CD4-positive, alpha-beta T cell (primary cell): ENCODE measurements at regions of chr2 and their contacts with region 1.

Region 1: DNA sequence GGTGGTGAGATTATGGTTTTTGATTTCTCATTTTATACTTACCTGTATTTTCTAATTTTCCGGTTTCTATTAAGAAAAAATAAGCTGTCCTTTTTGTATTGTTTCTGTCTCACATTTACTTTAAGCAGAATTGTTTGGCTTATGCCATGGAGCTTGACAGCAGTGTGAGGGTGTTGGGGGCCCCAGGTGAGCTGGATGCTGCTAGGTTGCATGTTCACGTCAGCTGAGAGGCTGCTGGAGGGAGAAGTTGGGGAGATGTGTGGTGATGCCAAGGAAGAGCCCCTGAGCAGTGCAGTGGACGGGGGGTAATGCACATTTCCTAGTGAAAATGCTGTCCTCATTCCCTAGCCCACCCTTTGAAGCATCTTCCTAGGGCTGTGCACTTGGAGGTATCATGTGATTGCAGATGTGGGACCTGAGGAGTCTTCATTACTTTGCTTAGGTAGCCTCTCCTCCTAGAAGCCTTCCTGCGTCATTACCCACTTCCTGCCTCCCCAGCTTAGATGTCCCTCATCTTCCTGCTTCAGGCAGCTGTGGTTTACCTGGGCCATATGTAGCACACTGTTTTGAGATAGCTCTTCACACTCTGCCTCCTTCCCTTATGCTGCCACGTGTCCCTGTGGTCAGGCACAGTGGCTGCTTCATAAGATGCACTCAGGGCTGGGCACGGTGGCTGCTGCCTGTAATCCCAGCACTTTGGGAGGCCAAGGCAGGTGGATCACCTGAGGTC is 16.2 kb downstream of the ATG16L1 start:
- DNase-seq: peak; percentile 64 to 96 (median 74)
- ATAC-seq: peak; percentile 88
- H3K4me3 ChIP-seq: peak overlapping the region; percentile 26
- H3K4me3 Mint-ChIP-seq: peak overlapping the region; percentile 62
- H3K27ac ChIP-seq: peak overlapping the region; percentile 86 to 88
- H3K27ac Mint-ChIP-seq: peak overlapping the region; percentile 97
- H3K4me1 ChIP-seq: peaks cover 57% of the 10 kb centered on the region
- H3K4me1 Mint-ChIP-seq: peaks cover 74% of the 10 kb centered on the region
- H3K27me3 ChIP-seq: no peaks in the 10 kb centered on the region
- H3K27me3 Mint-ChIP-seq: no peaks in the 10 kb centered on the region
- CTCF ChIP-seq: no peak

Region 2: GRCh38 chr2:233084488-233084887 is 183.2 kb before region 1 on chr2:
- CTCF ChIA-PET with region 1: no interaction called
- POLR2A ChIA-PET with region 1: interaction called, 6 read pairs
- intact Hi-C with region 1: loop called in 1 of 2 experiments (anchors 5 kb)
- DNase-seq: peak in 9 of 14 experiments; percentile 31 to 83 (median 53)
- ATAC-seq: peak; percentile 32
- H3K4me3 ChIP-seq: peak overlapping the region; percentile 19
- H3K4me3 Mint-ChIP-seq: peak overlapping the region; percentile 83
- H3K27ac ChIP-seq: peak overlapping the region; percentile 67 to 71
- H3K27ac Mint-ChIP-seq: peak overlapping the region; percentile 85
- H3K4me1 ChIP-seq: peaks cover 94% of the 10 kb centered on the region
- H3K4me1 Mint-ChIP-seq: peaks cover 88% of the 10 kb centered on the region
- H3K27me3 ChIP-seq: no peaks in the 10 kb centered on the region
- H3K27me3 Mint-ChIP-seq: no peaks in the 10 kb centered on the region
- CTCF ChIP-seq: no peak

Region 3: GRCh38 chr2:233094614-233095013 is 173.1 kb before region 1 on chr2:
- CTCF ChIA-PET with region 1: no interaction called
- POLR2A ChIA-PET with region 1: no interaction called
- intact Hi-C with region 1: no loop called
- DNase-seq: no peak
- ATAC-seq: no peak
- H3K4me3 ChIP-seq: no peak overlapping the region
- H3K4me3 Mint-ChIP-seq: no peak overlapping the region
- H3K27ac ChIP-seq: no peak overlapping the region
- H3K27ac Mint-ChIP-seq: peak overlapping the region; percentile 19
- H3K4me1 ChIP-seq: peaks cover 42% of the 10 kb centered on the region
- H3K4me1 Mint-ChIP-seq: peaks cover 80% of the 10 kb centered on the region
- H3K27me3 ChIP-seq: no peaks in the 10 kb centered on the region
- H3K27me3 Mint-ChIP-seq: no peaks in the 10 kb centered on the region
- CTCF ChIP-seq: no peak

Region 4: DNA sequence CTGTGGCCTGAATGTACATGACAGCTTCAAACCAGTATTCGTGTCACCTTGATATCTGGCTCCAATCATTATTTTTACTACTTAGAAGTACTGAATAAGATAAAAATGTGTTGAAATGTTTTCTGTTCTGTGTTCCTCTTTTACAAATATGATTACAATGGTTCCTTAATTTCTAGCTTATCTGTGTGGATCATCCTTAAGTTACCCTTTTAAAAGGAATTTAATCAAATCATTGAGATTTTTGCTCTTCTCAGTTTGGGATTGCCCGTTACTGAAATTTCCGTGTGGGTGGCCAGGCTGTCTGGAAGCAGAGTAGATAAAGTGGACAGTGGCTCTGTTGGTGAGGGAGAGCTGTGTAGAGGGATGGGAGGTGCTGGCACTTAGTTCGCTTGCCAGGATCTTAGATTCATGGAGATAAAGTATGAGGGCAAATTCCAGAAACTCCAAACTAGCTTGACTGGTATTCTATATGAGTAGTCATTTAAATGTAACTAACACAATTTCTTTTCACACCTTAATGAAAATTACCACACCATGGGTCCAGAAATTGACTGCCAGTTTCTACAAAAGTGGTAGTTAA is 12.5 kb after region 1 on chr2:
- CTCF ChIA-PET with region 1: interaction called, 4 read pairs
- POLR2A ChIA-PET with region 1: interaction called, 16 read pairs
- intact Hi-C with region 1: no loop called
- DNase-seq: no peak
- ATAC-seq: no peak
- H3K4me3 ChIP-seq: no peak overlapping the region
- H3K4me3 Mint-ChIP-seq: no peak overlapping the region
- H3K27ac ChIP-seq: no peak overlapping the region
- H3K27ac Mint-ChIP-seq: peak overlapping the region; percentile 72
- H3K4me1 ChIP-seq: peaks cover 4% of the 10 kb centered on the region
- H3K4me1 Mint-ChIP-seq: peaks cover 43% of the 10 kb centered on the region
- H3K27me3 ChIP-seq: no peaks in the 10 kb centered on the region
- H3K27me3 Mint-ChIP-seq: no peaks in the 10 kb centered on the region
- CTCF ChIP-seq: no peak

Region 5: GRCh38 chr2:233331536-233331935 is 63.9 kb after region 1 on chr2:
- CTCF ChIA-PET with region 1: no interaction called
- POLR2A ChIA-PET with region 1: interaction called, 77 read pairs
- intact Hi-C with region 1: loop called (anchors 1 to 2 kb)
- DNase-seq: peak; percentile 60 to 94 (median 73)
- ATAC-seq: peak; percentile 96
- H3K4me3 ChIP-seq: peak overlapping the region; percentile 5
- H3K4me3 Mint-ChIP-seq: peak overlapping the region; percentile 78
- H3K27ac ChIP-seq: peak overlapping the region; percentile 80 to 86
- H3K27ac Mint-ChIP-seq: peak overlapping the region; percentile 93
- H3K4me1 ChIP-seq: peaks cover 63% of the 10 kb centered on the region
- H3K4me1 Mint-ChIP-seq: peaks cover 57% of the 10 kb centered on the region
- H3K27me3 ChIP-seq: no peaks in the 10 kb centered on the region
- H3K27me3 Mint-ChIP-seq: no peaks in the 10 kb centered on the region
- CTCF ChIP-seq: no peak

Region 6: GRCh38 chr2:233418761-233419625 is 151.3 kb after region 1 on chr2:
- CTCF ChIA-PET with region 1: no interaction called
- POLR2A ChIA-PET with region 1: interaction called, 12 read pairs
- intact Hi-C with region 1: no loop called
- DNase-seq: peak in 13 of 14 experiments; percentile 31 to 81 (median 63)
- ATAC-seq: peak; percentile 47
- H3K4me3 ChIP-seq: peak overlapping the region; percentile 56
- H3K4me3 Mint-ChIP-seq: peak overlapping the region; percentile 89
- H3K27ac ChIP-seq: peak overlapping the region; percentile 66 to 77
- H3K27ac Mint-ChIP-seq: peak overlapping the region; percentile 95
- H3K4me1 ChIP-seq: peaks cover 98% of the 10 kb centered on the region
- H3K4me1 Mint-ChIP-seq: peaks cover 98% of the 10 kb centered on the region
- H3K27me3 ChIP-seq: no peaks in the 10 kb centered on the region
- H3K27me3 Mint-ChIP-seq: no peaks in the 10 kb centered on the region
- CTCF ChIP-seq: no peak

Region 7: GRCh38 chr2:233822781-233823730 is 555.4 kb after region 1 on chr2:
- CTCF ChIA-PET with region 1: no interaction called
- POLR2A ChIA-PET with region 1: no interaction called
- intact Hi-C with region 1: no loop called
- DNase-seq: peak in 1 of 14 experiments; percentile 30
- ATAC-seq: no peak
- H3K4me3 ChIP-seq: no peak overlapping the region
- H3K4me3 Mint-ChIP-seq: no peak overlapping the region
- H3K27ac ChIP-seq: no peak overlapping the region
- H3K27ac Mint-ChIP-seq: no peak overlapping the region
- H3K4me1 ChIP-seq: no peaks in the 10 kb centered on the region
- H3K4me1 Mint-ChIP-seq: no peaks in the 10 kb centered on the region
- H3K27me3 ChIP-seq: peaks cover 0 to 2% of the 10 kb centered on the region in 2 experiments
- H3K27me3 Mint-ChIP-seq: peaks cover 3% of the 10 kb centered on the region
- CTCF ChIP-seq: no peak

Region 8: DNA sequence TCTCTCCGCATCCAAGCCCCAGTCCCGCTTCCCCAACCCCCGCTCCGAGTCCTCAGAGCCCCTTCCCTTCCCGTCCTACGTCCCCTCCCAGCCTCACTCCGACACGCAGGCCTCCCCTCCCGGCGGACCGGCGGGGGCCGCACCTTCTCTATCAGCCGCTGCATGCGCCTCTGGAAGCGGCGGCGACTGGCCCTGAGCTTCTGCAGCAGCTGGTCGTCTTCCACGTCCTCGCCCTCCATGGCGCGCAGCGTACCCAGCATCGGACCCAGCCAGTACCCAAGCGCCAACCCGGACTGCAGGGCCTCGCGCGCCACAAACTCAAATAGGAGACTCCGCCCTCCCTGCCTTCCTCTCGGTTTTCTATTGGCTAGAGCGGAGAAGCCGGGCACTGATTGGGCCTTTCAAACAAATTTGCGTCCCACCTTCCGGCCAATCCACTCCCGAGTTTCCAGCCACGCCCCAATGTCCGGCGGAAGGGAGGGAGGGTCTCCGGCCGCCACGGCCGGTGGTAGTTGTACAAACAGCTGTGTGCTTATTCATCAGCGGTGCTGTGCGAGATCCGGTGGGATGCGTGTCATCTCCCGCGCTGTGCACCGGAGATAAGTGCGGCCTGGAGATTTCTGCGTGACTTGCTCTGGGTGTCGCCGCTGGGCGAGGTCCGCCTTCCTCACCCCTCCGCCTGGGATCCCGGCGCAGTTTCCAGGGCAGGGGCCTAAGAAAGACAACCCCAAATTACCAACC is 586.7 kb after region 1 on chr2 and contains the start of gene HJURP:
- CTCF ChIA-PET with region 1: no interaction called
- POLR2A ChIA-PET with region 1: no interaction called
- intact Hi-C with region 1: loop called in 1 of 2 experiments (anchors 10 kb)
- DNase-seq: peak; percentile 76 to 96 (median 82)
- ATAC-seq: peak; percentile 97
- H3K4me3 ChIP-seq: peak within 1 kb of the TSS; percentile 83
- H3K4me3 Mint-ChIP-seq: peak within 1 kb of the TSS; percentile 88
- H3K27ac ChIP-seq: no peak within 1 kb of the TSS
- H3K27ac Mint-ChIP-seq: peak within 1 kb of the TSS; percentile 21
- H3K4me1 ChIP-seq: peaks cover 21% of the 10 kb centered on the region
- H3K4me1 Mint-ChIP-seq: peaks cover 32% of the 10 kb centered on the region
- H3K27me3 ChIP-seq: peaks cover 4 to 9% of the 10 kb centered on the region in 2 experiments
- H3K27me3 Mint-ChIP-seq: peaks cover 16% of the 10 kb centered on the region
- CTCF ChIP-seq: no peak
- total RNA-seq, gene HJURP: 0.22 to 0.25 TPM